Lower leg skin (tissue), 4 donors: ENCODE measurements at regions of chr3 and their contacts with region 1.

Region 1: GRCh38 chr3:160224256-160224655 is 966 bp upstream of the C3orf80 start:
- DNase-seq: no peak
- H3K4me3 ChIP-seq: no peak overlapping the region
- CTCF ChIP-seq: no peak
- POLR2A ChIP-seq: no peak

Region 2: GRCh38 chr3:158696618-158697017 is 1527.6 kb before region 1 on chr3:
- intact Hi-C with region 1: loop called (anchors 5 kb)
- DNase-seq: no peak
- H3K4me3 ChIP-seq: no peak overlapping the region
- CTCF ChIP-seq: no peak
- POLR2A ChIP-seq: no peak

Region 3: DNA sequence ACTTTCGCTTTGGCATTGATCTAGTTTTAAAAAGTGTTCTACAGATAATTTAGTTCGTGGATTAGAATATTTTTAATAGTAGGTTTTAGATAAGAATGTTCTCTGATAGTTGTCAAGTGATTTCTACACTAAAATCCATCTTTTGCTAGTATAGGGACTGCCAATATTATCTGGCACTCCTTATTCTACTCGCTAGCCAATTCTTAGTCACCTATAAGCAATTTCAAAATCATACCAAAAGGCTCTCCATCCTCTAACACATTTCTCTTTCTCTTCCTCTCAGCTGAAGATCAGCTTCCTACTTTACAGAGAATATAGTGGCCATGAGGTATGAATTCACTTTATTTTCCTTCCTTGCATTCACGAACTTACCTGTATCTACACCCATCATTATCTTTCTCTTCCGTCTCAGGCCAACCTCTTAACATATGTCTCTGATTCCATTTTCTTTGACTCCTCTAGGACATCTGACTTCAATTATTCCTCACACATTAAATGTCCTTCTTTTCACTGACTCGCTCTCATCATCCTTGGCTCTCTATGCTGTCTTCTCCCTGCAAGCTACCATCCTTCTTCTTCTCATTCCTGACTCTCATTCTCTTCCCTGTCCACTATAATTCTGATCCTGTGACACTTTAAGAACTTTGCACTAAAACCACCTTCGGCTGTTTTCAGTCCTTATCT is 36.5 kb after region 1 on chr3:
- intact Hi-C with region 1: no loop called
- DNase-seq: no peak
- H3K4me3 ChIP-seq: no peak overlapping the region
- CTCF ChIP-seq: no peak
- POLR2A ChIP-seq: no peak